BJ (cell line): ENCODE measurements at regions of chr3 and their contacts with region 1.

Region 1: GRCh38 chr3:148955544-148956346 is 35.6 kb upstream of the GYG1 start:
- DNase-seq: peak; percentile 90
- H3K4me3 ChIP-seq: no peak overlapping the region
- H3K27me3 ChIP-seq: no peaks in the 10 kb centered on the region
- CTCF ChIP-seq: peak; percentile 70

Region 2: DNA sequence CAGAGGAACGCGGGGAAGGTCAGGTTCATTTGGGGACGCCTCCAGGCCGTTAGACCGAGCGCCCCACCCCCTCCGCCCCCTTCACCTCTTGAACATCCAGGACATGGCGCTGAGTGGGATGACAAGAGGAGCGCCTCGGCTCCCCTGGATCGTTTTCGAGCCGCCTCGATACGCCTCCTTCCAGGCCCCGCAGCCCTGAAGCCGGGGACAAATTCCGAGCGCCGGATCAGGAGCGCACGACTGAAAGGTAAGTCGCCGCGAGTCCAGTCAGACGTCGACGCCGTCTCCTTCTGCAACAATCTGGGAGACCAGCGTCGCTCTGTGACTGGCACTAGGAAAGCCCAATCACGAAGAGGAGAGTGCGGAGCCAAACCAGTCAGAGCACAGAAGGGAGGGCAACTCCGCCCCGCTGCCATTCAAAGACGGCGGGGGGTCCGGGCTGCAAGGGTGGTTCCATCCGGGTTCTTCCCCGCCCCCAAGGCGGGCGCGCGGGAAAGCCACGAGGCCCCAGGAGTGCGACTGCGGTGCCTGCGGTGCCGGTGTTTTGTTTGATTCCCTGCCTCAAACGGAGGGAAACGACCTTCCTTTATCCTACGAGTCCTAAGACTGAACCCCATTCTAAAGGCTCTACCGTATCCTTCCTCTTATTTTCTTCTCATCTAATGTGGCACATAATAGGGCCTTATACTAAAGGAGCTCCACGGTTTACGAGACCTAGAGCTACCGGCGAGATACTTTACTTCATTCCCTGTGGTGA is 130.7 kb after region 1 on chr3 and contains the start of gene HLTF:
- CTCF ChIA-PET with region 1: no interaction called
- POLR2A ChIA-PET with region 1: interaction called, 28 read pairs
- DNase-seq: peak; percentile 89
- H3K4me3 ChIP-seq: peak within 1 kb of the TSS; percentile 59
- H3K27me3 ChIP-seq: no peaks in the 10 kb centered on the region
- CTCF ChIP-seq: no peak
- polyA plus RNA-seq, gene HLTF: 17.3 and 22.0 TPM in 2 replicates

Region 3: DNA sequence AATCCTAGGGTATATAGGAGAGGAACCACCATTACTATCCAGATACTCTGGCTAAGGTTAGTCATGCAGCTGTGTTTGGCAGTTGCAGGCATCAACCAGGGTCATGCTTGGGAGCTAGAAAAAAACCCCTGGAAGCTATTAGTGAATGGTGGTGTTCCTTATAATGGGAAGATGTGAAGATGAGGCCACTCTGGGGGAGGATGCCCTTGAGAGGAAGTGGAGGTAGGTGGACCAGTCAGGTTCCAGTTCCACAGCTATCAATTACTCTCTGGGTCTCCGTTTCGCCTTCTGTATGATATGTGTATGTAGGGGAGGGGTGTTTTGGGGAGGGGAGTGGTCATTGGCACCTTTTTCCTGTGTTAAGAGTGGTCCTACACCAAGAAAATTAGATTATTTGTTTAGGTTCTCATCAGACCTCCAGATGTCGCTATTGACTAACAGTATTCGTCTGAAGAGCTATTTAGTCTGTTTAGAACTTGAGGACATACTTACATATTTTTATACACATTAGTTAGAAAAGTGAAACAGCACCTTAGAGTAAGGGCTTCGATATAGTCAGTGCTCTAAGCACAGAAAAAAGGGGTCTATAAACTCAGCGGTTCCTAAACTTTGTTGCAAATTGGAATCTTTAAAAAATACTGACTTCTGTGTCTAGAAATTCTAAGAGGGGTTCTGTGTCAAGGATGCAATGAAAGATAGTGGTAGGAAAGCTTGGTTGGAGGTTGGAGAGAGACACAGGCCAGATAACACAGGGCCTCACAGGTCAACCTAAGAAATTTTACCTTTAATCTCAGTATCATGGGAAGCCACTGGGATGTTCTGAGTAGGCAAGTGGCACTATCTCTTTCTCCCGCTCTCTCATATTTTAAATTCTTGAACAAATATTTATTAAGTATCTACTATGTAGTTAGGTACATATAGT is 164.6 kb after region 1 on chr3:
- CTCF ChIA-PET with region 1: interaction called, 33 read pairs
- POLR2A ChIA-PET with region 1: no interaction called
- DNase-seq: peak; percentile 26
- H3K4me3 ChIP-seq: no peak overlapping the region
- H3K27me3 ChIP-seq: no peaks in the 10 kb centered on the region
- CTCF ChIP-seq: peak; percentile 47; the same call in 1 of the 2 replicates

Region 4: GRCh38 chr3:149145974-149146373 is 190.2 kb after region 1 on chr3:
- CTCF ChIA-PET with region 1: no interaction called
- POLR2A ChIA-PET with region 1: no interaction called
- DNase-seq: no peak
- H3K4me3 ChIP-seq: no peak overlapping the region
- H3K27me3 ChIP-seq: no peaks in the 10 kb centered on the region
- CTCF ChIP-seq: no peak

Region 5: GRCh38 chr3:149273096-149273751 is 317.5 kb after region 1 on chr3:
- CTCF ChIA-PET with region 1: interaction called, 19 read pairs
- POLR2A ChIA-PET with region 1: no interaction called
- DNase-seq: peak; percentile 19
- H3K4me3 ChIP-seq: no peak overlapping the region
- H3K27me3 ChIP-seq: no peaks in the 10 kb centered on the region
- CTCF ChIP-seq: peak; percentile 88

Region 6: DNA sequence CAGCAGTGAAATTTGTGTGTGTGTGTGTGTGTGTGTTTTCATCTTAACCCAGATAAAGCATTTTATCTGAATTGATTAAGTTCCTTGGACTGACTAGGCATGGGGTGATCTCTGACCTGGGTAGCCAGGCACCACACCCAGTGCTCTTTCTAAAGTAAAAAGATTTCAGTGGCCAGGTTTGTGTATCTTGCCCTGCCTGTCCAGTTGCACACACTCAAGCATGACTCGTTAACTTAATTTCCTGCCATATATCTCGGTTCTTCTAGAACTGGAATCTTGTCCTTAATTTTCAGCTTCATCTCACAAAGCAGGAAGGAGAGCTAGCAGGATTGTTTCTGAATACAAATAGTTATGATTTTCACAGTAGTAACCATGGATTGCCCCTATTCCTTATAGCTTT is 360.7 kb after region 1 on chr3:
- CTCF ChIA-PET with region 1: no interaction called
- POLR2A ChIA-PET with region 1: interaction called, 11 read pairs
- DNase-seq: no peak
- H3K4me3 ChIP-seq: no peak overlapping the region
- H3K27me3 ChIP-seq: no peaks in the 10 kb centered on the region
- CTCF ChIP-seq: no peak

Region 7: DNA sequence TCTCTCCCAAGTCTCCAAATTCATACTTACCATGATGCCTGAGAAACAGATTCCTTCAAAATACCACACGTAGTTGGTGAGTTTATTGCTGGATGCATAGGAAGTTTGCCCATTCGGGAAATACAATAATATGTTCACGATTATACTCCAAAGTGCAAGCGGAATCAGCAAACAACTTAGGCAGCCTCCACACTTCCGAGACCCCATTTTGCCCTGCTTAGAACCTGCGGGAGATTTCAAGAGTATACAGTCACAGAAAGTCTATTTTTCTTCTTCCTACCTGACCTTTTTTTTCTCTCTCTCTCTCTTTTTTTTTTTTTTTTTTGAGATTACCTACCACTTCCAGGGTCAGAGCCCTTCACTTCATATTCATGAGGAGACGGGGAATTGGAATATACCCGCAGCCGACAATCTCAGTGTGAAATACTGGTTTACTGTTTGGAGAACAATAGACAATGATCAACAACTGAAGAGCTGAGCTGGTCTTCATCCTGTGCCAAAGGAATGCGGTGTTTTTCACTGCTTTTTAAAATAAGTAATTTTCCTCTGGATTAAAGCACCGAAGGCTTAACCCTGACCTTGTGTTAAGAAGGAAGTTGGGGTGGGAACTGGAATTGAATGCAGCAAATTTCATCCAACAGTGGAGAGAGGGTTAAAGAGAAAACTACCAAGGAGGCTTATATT is 377.6 kb after region 1 on chr3 and contains the start of gene TM4SF18:
- CTCF ChIA-PET with region 1: interaction called, 20 read pairs
- POLR2A ChIA-PET with region 1: no interaction called
- DNase-seq: no peak
- H3K4me3 ChIP-seq: no peak within 1 kb of the TSS
- H3K27me3 ChIP-seq: no peaks in the 10 kb centered on the region
- CTCF ChIP-seq: no peak
- polyA plus RNA-seq, gene TM4SF18: 0.11 and 0.29 TPM in 2 replicates